ENCODE measurements at regions of chr1 and their contacts with region 1.

Region 1: GRCh38 chr1:30099587-30100523 is 623.5 kb downstream of the MATN1 start:
- DNase-seq: no peak
- ATAC-seq: no peak
- H3K4me3 ChIP-seq: no peak overlapping the region
- H3K27ac ChIP-seq: no peak overlapping the region
- H3K4me1 ChIP-seq: no peaks in the 10 kb centered on the region
- H3K27me3 ChIP-seq: no peaks in the 10 kb centered on the region
- CTCF ChIP-seq: no peak
- POLR2A ChIP-seq: no peak

Region 2: DNA sequence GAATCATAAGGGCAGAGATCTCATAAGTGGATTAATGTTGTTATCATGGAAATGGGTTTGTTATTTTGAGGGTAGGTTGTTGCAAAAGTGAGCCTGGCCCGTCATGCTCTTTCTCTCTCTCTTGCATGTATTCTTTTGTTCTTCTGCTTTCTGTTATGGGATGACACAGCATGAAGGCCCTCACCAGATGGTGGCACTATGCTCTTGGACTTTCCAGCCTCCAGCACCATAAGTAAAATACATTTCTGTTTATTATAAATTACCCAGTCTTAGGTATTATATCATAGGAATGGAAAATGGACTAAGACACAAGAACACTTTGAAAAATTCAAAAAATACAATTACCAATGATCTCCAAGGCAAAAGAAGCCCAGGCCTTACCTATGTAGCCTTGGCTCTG is 187.4 kb before region 1 on chr1:
- intact Hi-C with region 1: loop called in 1 of 2 experiments (anchors 10 kb)
- DNase-seq: no peak
- ATAC-seq: peak in 2 of 4 donors; percentile 53 to 55
- H3K4me3 ChIP-seq: no peak overlapping the region
- H3K27ac ChIP-seq: no peak overlapping the region
- H3K4me1 ChIP-seq: no peaks in the 10 kb centered on the region
- H3K27me3 ChIP-seq: no peaks in the 10 kb centered on the region
- CTCF ChIP-seq: peak; percentile 28 to 52 (median 40)
- POLR2A ChIP-seq: no peak

Region 3: GRCh38 chr1:29939079-29939478 is 160.8 kb before region 1 on chr1:
- intact Hi-C with region 1: no loop called
- DNase-seq: no peak
- ATAC-seq: no peak
- H3K4me3 ChIP-seq: no peak overlapping the region
- H3K27ac ChIP-seq: no peak overlapping the region
- H3K4me1 ChIP-seq: no peaks in the 10 kb centered on the region
- H3K27me3 ChIP-seq: no peaks in the 10 kb centered on the region
- CTCF ChIP-seq: no peak
- POLR2A ChIP-seq: no peak

Region 4: GRCh38 chr1:30397576-30397975 is 297.7 kb after region 1 on chr1:
- intact Hi-C with region 1: no loop called
- DNase-seq: peak in 1 of 3 donors; percentile 38
- ATAC-seq: no peak
- H3K4me3 ChIP-seq: no peak overlapping the region
- H3K27ac ChIP-seq: no peak overlapping the region
- H3K4me1 ChIP-seq: no peaks in the 10 kb centered on the region
- H3K27me3 ChIP-seq: no peaks in the 10 kb centered on the region
- CTCF ChIP-seq: no peak
- POLR2A ChIP-seq: no peak

Measured in right lobe of liver (tissue), 6 donors.